T-cell (primary cell): ENCODE measurements at regions of chr6 and their contacts with region 1.

Region 1: DNA sequence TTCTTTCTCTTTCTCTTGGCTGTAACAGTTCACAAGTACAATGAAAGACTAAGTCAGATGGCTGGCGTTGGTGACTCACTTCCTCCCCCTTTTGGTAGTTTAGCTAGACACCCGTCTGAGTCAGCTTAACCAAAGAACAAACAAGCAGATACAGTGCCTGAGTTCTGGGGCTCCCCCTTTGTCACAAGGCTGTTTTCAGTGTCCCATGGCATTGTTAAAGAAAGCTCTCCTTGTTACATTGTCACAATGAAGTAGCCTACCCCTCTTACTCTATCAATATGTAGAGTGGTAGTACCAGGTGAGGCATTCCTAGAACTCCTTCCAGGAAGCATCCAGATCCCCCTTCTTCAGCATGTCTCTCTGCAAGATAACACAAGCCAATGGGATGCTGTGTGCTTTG is 38.6 kb downstream of the KIAA0408 start:
- DNase-seq: peak; percentile 7 to 71 (median 35)
- ATAC-seq: peak; percentile 99 to 100 (median 100)
- H3K4me3 ChIP-seq: no peak overlapping the region
- H3K4me3 Mint-ChIP-seq: no peak overlapping the region
- H3K27ac ChIP-seq: no peak overlapping the region
- H3K27ac Mint-ChIP-seq: peak overlapping the region; percentile 21 to 56
- H3K4me1 ChIP-seq: no peaks in the 10 kb centered on the region
- H3K4me1 Mint-ChIP-seq: peaks cover 5 to 9% (median 7%) of the 10 kb centered on the region in 3 donors
- H3K27me3 ChIP-seq: no peaks in the 10 kb centered on the region
- H3K27me3 Mint-ChIP-seq: peaks cover 0 to 3% of the 10 kb centered on the region in 2 donors

Region 2: GRCh38 chr6:126701676-126702560 is 718.6 kb before region 1 on chr6:
- CTCF ChIA-PET with region 1: no interaction called
- POLR2A ChIA-PET with region 1: no interaction called
- DNase-seq: no peak
- ATAC-seq: no peak
- H3K4me3 ChIP-seq: no peak overlapping the region
- H3K4me3 Mint-ChIP-seq: no peak overlapping the region
- H3K27ac ChIP-seq: no peak overlapping the region
- H3K27ac Mint-ChIP-seq: no peak overlapping the region
- H3K4me1 ChIP-seq: no peaks in the 10 kb centered on the region
- H3K4me1 Mint-ChIP-seq: no peaks in the 10 kb centered on the region
- H3K27me3 ChIP-seq: no peaks in the 10 kb centered on the region
- H3K27me3 Mint-ChIP-seq: no peaks in the 10 kb centered on the region

Region 3: DNA sequence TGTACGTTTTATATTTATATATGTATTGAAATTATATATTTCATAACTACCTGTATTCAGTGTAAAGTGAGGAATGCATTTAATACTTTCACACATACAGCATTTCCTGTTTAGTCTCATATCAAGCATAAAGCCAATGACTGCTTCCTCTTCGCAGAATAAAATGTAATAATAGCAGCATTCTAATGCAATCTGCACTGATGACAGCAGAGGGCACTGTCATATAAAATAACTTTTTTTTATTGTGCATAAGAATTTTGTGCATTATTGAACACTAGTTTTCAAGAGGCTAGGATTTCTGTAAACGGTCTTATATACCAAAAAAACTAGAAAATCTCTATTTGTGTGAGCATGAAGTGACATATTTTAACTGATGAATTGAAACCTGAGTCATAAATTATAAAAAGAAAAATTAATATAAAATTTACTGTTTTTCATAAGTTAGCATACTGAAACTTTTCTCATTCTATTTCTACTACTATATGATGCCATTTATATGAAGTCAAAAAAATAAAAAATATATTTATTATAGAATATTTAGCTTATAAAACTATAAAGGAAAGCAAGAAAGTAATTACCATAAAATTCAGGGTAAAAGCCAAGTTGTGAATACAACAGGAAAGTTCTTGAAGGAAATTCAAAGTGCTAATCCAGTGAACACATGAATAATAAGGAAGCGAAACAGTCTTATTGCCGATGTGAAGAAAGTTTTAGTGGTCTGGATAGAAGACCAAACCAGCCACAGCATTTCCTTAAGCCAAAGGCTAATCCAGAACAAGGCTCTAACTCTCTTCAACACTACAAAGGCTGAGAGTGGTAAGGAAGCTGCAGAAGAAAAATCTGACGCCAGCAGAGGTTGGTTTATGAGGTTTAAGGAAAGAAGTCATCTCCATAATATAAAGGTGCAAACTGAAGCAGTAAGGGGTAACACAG is 117.6 kb before region 1 on chr6:
- CTCF ChIA-PET with region 1: interaction called, 5 to 13 read pairs
- POLR2A ChIA-PET with region 1: no interaction called
- DNase-seq: peak in 28 of 35 experiments; percentile 2 to 69 (median 32)
- ATAC-seq: peak; percentile 69 to 74 (median 70)
- H3K4me3 ChIP-seq: no peak overlapping the region
- H3K4me3 Mint-ChIP-seq: no peak overlapping the region
- H3K27ac ChIP-seq: no peak overlapping the region
- H3K27ac Mint-ChIP-seq: peak overlapping the region in 1 of 2 donors; percentile 53
- H3K4me1 ChIP-seq: peaks cover 0 to 2% of the 10 kb centered on the region in 2 experiments
- H3K4me1 Mint-ChIP-seq: peaks cover 37 to 49% (median 48%) of the 10 kb centered on the region in 3 donors
- H3K27me3 ChIP-seq: no peaks in the 10 kb centered on the region
- H3K27me3 Mint-ChIP-seq: no peaks in the 10 kb centered on the region

Region 4: GRCh38 chr6:127436578-127437110 is 16.1 kb after region 1 on chr6:
- CTCF ChIA-PET with region 1: no interaction called
- POLR2A ChIA-PET with region 1: no interaction called
- DNase-seq: no peak
- ATAC-seq: no peak
- H3K4me3 ChIP-seq: no peak overlapping the region
- H3K4me3 Mint-ChIP-seq: no peak overlapping the region
- H3K27ac ChIP-seq: no peak overlapping the region
- H3K27ac Mint-ChIP-seq: no peak overlapping the region
- H3K4me1 ChIP-seq: no peaks in the 10 kb centered on the region
- H3K4me1 Mint-ChIP-seq: no peaks in the 10 kb centered on the region
- H3K27me3 ChIP-seq: no peaks in the 10 kb centered on the region
- H3K27me3 Mint-ChIP-seq: peaks cover 3 to 10% of the 10 kb centered on the region in 2 donors